Activated CD4-positive, alpha-beta T cell treated with anti-CD3 and anti-CD28 coated beads for 36 hours (primary cell): ENCODE measurements at regions of chr12 and their contacts with region 1.

Region 1: DNA sequence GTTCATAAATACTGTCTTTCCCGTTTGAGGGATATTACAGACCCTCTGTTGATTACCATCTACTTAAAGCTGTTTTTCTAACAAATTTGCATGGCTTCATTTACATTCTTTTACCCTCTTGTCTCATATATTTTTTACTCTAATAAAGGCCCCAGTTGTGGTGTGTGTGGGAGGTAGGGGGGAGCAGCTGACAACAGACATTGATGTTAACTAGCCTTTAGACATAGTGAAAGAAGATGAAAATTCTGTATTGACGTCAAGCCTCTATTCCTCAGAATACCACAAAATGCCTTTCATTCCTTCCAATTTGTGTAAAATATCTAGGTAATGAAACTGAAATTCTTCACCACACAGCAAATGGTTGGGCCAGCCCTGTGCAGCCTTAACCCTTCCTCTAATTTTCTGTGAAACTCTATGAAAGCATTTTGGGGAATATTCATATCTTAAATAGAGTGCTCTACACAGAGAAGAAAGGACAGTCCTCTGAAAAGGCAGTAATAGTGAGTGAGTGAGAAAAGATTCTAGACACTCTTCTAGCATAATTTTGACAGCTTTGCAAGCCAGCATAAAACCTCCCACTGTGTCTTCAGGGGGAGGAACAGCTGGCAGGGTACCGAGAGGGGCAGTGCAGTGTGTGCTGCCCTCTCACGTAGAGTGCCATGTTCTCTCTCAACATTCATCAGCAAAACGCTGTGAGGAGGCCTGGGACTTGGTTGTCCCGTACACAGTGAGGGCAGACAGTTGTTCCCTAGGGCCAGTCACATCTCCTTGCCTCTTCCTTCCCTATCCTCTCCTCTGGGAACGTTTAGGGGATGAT is 20.1 kb upstream of the CERS5 start:
- DNase-seq: peak; percentile 73
- ATAC-seq: peak; percentile 74
- H3K4me3 Mint-ChIP-seq: peak overlapping the region; percentile 40
- H3K27ac Mint-ChIP-seq: peak overlapping the region; percentile 87
- H3K4me1 Mint-ChIP-seq: peaks cover 55% of the 10 kb centered on the region
- H3K27me3 Mint-ChIP-seq: no peaks in the 10 kb centered on the region

Region 2: GRCh38 chr12:50222275-50222795 is 35.0 kb after region 1 on chr12:
- CTCF ChIA-PET with region 1: interaction called, 6 read pairs
- POLR2A ChIA-PET with region 1: interaction called, 15 read pairs
- intact Hi-C with region 1: loop called (anchors 1 to 2 kb)
- DNase-seq: peak; percentile 48
- ATAC-seq: peak; percentile 21
- H3K4me3 Mint-ChIP-seq: no peak overlapping the region
- H3K27ac Mint-ChIP-seq: no peak overlapping the region
- H3K4me1 Mint-ChIP-seq: peaks cover 40% of the 10 kb centered on the region
- H3K27me3 Mint-ChIP-seq: no peaks in the 10 kb centered on the region

Region 3: GRCh38 chr12:50246873-50247612 is 59.8 kb after region 1 on chr12:
- CTCF ChIA-PET with region 1: interaction called, 3 read pairs
- POLR2A ChIA-PET with region 1: interaction called, 3 read pairs
- intact Hi-C with region 1: loop called (anchors 1 to 5 kb)
- DNase-seq: peak; percentile 63
- ATAC-seq: peak; percentile 82
- H3K4me3 Mint-ChIP-seq: peak overlapping the region; percentile 70
- H3K27ac Mint-ChIP-seq: peak overlapping the region; percentile 88
- H3K4me1 Mint-ChIP-seq: peaks cover 60% of the 10 kb centered on the region
- H3K27me3 Mint-ChIP-seq: no peaks in the 10 kb centered on the region

Region 4: DNA sequence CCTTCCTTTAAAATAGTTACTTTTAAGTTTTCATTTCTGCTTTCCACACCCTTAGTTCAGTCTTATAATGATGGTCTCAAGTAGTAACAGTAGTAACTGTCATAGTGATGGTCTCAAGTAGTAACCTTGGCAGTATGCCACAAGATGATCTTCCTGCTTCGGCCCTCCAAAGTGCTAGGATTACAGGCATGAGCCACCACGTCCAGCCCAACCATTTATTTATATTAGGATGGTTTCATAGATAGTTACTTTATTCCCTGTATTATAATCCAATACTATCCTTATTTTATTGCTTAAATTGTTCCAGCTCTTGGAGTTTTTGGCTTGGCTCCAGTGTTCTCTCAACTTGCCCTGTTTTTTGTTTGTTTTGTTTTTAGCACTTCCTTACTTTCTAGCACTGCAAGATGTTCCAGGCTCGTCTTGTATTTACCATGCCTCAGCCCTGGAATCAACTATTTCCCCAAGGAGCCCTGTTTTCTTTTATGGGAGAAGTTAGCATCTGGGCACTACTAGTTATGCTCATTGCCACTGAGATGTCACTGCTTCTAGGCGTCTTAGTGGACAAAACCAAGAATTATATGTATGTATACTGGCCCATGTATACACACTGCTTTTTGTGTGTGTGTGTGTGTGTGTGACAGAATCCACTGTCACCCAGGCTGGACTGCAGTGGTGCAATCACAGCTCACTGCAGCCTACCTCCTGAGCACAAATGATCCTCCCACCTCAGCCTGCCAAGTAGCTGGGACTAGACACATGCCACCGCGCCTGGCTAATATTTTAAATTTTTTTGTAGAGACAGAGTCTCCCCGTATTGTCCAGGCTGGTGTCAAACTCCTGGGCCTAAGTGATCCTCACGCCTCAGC is 70.6 kb after region 1 on chr12:
- CTCF ChIA-PET with region 1: no interaction called
- POLR2A ChIA-PET with region 1: no interaction called
- intact Hi-C with region 1: loop called in 1 of 2 experiments (anchors 1 kb)
- DNase-seq: no peak
- ATAC-seq: no peak
- H3K4me3 Mint-ChIP-seq: no peak overlapping the region
- H3K27ac Mint-ChIP-seq: no peak overlapping the region
- H3K4me1 Mint-ChIP-seq: peaks cover 21% of the 10 kb centered on the region
- H3K27me3 Mint-ChIP-seq: no peaks in the 10 kb centered on the region

Region 5: GRCh38 chr12:50314629-50315312 is 127.5 kb after region 1 on chr12:
- CTCF ChIA-PET with region 1: interaction called, 4 read pairs
- POLR2A ChIA-PET with region 1: no interaction called
- intact Hi-C with region 1: loop called (anchors 5 to 10 kb)
- DNase-seq: no peak
- ATAC-seq: no peak
- H3K4me3 Mint-ChIP-seq: no peak overlapping the region
- H3K27ac Mint-ChIP-seq: no peak overlapping the region
- H3K4me1 Mint-ChIP-seq: peaks cover 7% of the 10 kb centered on the region
- H3K27me3 Mint-ChIP-seq: no peaks in the 10 kb centered on the region